Naive thymus-derived CD4-positive, alpha-beta T cell (primary cell): ENCODE measurements at regions of chr12 and their contacts with region 1.

Region 1: DNA sequence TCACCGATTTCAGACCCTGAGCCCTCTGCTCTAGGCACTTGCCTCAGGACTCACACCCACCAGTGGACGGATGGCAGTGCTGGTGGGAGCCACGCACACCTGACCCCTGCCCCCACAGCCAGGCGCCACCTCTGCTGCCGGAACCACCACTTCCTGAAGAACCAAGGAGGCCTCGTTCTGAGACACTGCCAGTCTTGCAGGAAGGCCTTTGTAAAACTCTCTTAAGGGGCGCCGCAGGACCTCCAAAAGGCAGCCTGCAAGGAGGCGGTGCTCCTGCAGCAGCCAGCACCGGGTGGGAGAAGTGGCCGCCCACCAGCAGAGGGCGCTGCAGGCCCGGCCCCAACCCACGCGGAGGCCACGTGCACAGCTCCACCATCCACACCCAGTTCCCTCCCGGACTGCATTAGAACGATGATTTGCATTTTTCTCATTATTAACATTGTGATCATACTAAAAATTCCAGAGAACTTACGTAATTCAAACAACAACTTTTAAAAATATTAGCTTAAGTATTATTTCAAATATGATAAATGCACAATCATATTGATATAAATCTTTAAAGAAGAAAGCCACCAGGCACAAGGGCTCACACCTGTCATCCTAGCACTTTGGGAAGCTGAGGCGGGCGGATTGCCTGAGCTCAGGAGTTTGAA is 12.8 kb downstream of the STX2 start:
- DNase-seq: peak; percentile 52 to 79 (median 73)
- ATAC-seq: peak; percentile 96
- H3K4me3 ChIP-seq: no peak overlapping the region
- H3K4me3 Mint-ChIP-seq: no peak overlapping the region
- H3K27ac ChIP-seq: no peak overlapping the region
- H3K27ac Mint-ChIP-seq: peak overlapping the region in 4 of 9 donors; percentile 13 to 58 (median 34)
- H3K4me1 ChIP-seq: no peaks in the 10 kb centered on the region
- H3K4me1 Mint-ChIP-seq: peaks cover 4 to 14% (median 9%) of the 10 kb centered on the region in 7 donors
- H3K27me3 ChIP-seq: no peaks in the 10 kb centered on the region
- H3K27me3 Mint-ChIP-seq: no peaks in the 10 kb centered on the region

Region 2: DNA sequence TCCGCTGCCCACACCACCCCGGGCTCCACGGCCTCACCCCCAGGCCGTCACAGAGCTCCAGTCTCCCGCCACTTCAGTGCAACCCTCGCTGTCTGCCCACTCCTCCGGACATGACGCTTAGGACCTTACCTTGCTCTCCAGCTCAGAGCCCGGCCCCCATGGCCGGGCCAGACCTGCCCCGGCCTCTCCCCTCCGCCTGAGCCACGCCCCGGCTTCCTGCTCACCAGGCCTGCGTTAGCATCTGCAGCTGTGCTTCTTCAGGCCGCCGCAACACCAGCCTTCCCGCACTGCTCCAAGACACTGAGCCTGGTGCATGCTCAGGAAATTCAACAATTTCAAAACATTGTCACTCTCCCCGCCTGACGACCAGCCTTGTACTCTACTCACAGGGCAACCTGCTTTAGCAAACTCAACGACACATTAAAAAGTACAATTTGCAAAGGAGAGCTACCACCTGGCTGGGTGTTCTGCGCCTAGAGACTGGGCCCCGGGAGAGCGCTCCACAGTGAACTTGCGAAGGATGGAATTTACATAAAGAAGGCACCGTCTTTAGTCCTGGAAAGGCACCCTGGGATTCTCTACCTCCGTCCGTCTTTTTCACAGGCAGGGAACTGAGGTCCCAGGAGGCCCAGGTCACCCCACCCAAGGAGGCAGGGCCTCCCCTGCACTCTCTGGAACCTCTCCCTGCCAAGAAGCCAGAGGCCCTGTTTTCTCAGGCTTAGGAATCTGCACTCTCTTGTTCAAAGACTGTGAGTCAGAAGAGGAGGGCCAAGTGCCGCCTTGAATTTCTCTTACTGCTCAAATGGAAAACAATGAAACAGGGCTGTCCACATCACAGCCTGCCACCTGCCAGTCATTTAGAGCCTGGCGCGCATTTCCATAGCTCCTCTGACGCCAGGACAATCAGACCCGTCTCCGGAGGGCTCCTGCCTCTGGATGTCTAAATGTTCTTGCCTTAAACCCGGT is 38.5 kb before region 1 on chr12:
- CTCF ChIA-PET with region 1: no interaction called
- POLR2A ChIA-PET with region 1: no interaction called
- intact Hi-C with region 1: no loop called
- DNase-seq: no peak
- ATAC-seq: no peak
- H3K4me3 ChIP-seq: no peak overlapping the region
- H3K4me3 Mint-ChIP-seq: no peak overlapping the region
- H3K27ac ChIP-seq: no peak overlapping the region
- H3K27ac Mint-ChIP-seq: no peak overlapping the region
- H3K4me1 ChIP-seq: no peaks in the 10 kb centered on the region
- H3K4me1 Mint-ChIP-seq: peaks cover 0 to 5% (median 0%) of the 10 kb centered on the region in 7 donors
- H3K27me3 ChIP-seq: no peaks in the 10 kb centered on the region
- H3K27me3 Mint-ChIP-seq: no peaks in the 10 kb centered on the region

Region 3: GRCh38 chr12:130838951-130839769 is 12.9 kb after region 1 on chr12 and contains the start of gene STX2:
- CTCF ChIA-PET with region 1: interaction called, 5 read pairs
- POLR2A ChIA-PET with region 1: interaction called, 3 read pairs
- intact Hi-C with region 1: loop called (anchors 1 kb)
- DNase-seq: peak; percentile 82 to 96 (median 92)
- ATAC-seq: peak; percentile 99
- H3K4me3 ChIP-seq: peak within 1 kb of the TSS; percentile 84
- H3K4me3 Mint-ChIP-seq: peak within 1 kb of the TSS; percentile 81 to 90 (median 84)
- H3K27ac ChIP-seq: peak within 1 kb of the TSS; percentile 65
- H3K27ac Mint-ChIP-seq: peak within 1 kb of the TSS; percentile 83 to 92 (median 90)
- H3K4me1 ChIP-seq: peaks cover 4 to 10% of the 10 kb centered on the region in 2 donors
- H3K4me1 Mint-ChIP-seq: peaks cover 12 to 38% (median 32%) of the 10 kb centered on the region in 7 donors
- H3K27me3 ChIP-seq: no peaks in the 10 kb centered on the region
- H3K27me3 Mint-ChIP-seq: no peaks in the 10 kb centered on the region
- total RNA-seq, gene STX2: 15.3 to 30.3 (median 21.5) TPM

Region 4: GRCh38 chr12:131132118-131132892 is 306.0 kb after region 1 on chr12:
- CTCF ChIA-PET with region 1: interaction called, 37 read pairs
- POLR2A ChIA-PET with region 1: interaction called, 3 read pairs
- intact Hi-C with region 1: loop called in 1 of 2 experiments (anchors 2 kb)
- DNase-seq: peak; percentile 37 to 81 (median 66)
- ATAC-seq: peak; percentile 71
- H3K4me3 ChIP-seq: no peak overlapping the region
- H3K4me3 Mint-ChIP-seq: no peak overlapping the region
- H3K27ac ChIP-seq: no peak overlapping the region
- H3K27ac Mint-ChIP-seq: peak overlapping the region in 1 of 9 donors; percentile 5
- H3K4me1 ChIP-seq: no peaks in the 10 kb centered on the region
- H3K4me1 Mint-ChIP-seq: peaks cover 0 to 10% (median 0%) of the 10 kb centered on the region in 7 donors
- H3K27me3 ChIP-seq: no peaks in the 10 kb centered on the region
- H3K27me3 Mint-ChIP-seq: no peaks in the 10 kb centered on the region

Region 5: DNA sequence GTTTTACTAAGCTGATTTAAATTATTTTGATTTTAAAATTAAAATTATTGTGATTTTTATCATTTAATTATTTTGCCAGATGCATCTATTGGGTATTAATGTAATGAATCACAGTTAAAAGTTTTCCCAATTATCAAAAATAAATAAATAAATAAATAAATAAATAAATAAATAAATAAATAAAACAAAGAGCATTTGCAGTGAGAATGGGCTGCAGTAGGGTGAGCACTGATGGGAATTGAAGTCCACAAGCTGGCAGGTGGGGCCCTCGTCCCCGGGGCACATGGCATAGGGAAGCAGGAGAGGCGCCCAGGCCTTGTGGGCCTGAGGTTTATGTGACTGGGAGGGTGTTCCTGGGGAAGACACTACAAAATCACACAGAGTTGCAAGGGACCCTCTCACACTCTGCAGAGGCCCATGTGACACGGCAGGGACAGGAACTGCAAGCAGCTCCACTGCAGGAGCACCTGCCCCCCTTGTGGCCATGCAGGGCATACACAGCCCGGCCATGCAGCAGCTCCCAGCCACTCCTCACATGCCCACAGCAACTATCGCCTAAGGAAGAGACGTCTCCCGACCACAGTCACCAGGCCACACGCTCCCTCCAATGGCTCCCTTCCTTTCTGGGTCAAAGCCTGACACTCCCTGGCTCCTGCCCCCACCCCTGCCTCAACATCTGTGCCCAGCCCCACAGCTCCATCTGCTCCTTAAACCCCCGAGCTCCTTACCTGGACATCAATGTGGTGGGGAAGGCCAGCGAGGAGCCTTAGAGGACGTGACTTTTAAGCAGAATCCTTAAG is 628.3 kb after region 1 on chr12:
- CTCF ChIA-PET with region 1: no interaction called
- POLR2A ChIA-PET with region 1: no interaction called
- intact Hi-C with region 1: loop called in 1 of 2 experiments (anchors 5 kb)
- DNase-seq: peak in 4 of 9 donors; percentile 7 to 30 (median 26)
- ATAC-seq: peak; percentile 70
- H3K4me3 ChIP-seq: no peak overlapping the region
- H3K4me3 Mint-ChIP-seq: no peak overlapping the region
- H3K27ac ChIP-seq: no peak overlapping the region
- H3K27ac Mint-ChIP-seq: peak overlapping the region in 1 of 9 donors; percentile 42
- H3K4me1 ChIP-seq: no peaks in the 10 kb centered on the region
- H3K4me1 Mint-ChIP-seq: peaks cover 0 to 7% (median 0%) of the 10 kb centered on the region in 7 donors
- H3K27me3 ChIP-seq: no peaks in the 10 kb centered on the region
- H3K27me3 Mint-ChIP-seq: peaks cover 10 to 27% (median 21%) of the 10 kb centered on the region in 5 donors